BJ (cell line): ENCODE measurements at regions of chr5 and their contacts with region 1.

Region 1: GRCh38 chr5:151014680-151015343 is 5.6 kb upstream of the GPX3 start:
- DNase-seq: no peak
- H3K4me3 ChIP-seq: no peak overlapping the region
- H3K27me3 ChIP-seq: 0 out of 2 replicates have a peak, but pooled peaks cover 2% of the 10 kb centered on the region
- CTCF ChIP-seq: no peak

Region 2: GRCh38 chr5:151002250-151002649 is 12.6 kb before region 1 on chr5:
- CTCF ChIA-PET with region 1: interaction called, 17 read pairs
- POLR2A ChIA-PET with region 1: no interaction called
- DNase-seq: no peak
- H3K4me3 ChIP-seq: no peak overlapping the region
- H3K27me3 ChIP-seq: peaks cover 2% of the 10 kb centered on the region
- CTCF ChIP-seq: peak; percentile 41